Transverse colon (tissue), 4 donors: ENCODE measurements at regions of chr4 and their contacts with region 1.

Region 1: GRCh38 chr4:153282023-153282422 is 62.5 kb upstream of the MND1 start:
- DNase-seq: no peak
- H3K4me3 ChIP-seq: no peak overlapping the region
- H3K27ac ChIP-seq: no peak overlapping the region
- H3K4me1 ChIP-seq: peaks cover 0 to 4% (median 0%) of the 10 kb centered on the region in 4 donors
- H3K27me3 ChIP-seq: no peaks in the 10 kb centered on the region
- CTCF ChIP-seq: no peak
- EP300 ChIP-seq: no peak
- POLR2A ChIP-seq: no peak

Region 2: DNA sequence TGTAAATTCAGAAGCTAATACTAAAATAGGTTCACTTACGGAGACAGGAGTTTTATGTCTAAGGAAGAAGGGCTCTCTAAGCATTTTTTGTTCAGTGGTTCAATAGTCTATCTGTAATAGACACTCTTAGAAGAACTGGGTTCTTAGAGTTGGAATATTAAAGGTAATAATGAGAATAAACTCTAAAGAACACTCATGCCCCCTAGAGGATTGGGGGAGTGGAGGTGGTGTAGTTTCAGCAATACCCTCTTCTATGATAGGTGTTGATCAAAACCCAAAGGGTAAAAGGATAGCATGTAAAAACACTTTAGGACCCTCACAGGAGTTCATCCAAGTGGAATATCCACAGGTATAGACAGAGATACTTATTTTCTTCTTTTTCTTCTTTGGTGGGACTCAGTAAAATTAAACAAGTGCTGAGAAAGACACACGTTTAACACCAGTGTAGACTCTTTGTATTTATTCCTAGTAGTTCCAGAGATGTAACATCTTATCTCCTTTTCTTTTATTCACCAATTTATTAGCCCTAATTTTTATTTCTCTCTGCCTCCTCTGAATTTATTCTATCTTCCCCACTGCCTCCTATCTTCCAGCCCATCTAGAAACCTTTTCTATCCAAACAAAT is 36.8 kb after region 1 on chr4:
- in situ Hi-C with region 1: no loop called
- intact Hi-C with region 1: loop called (anchors 2 kb)
- DNase-seq: no peak
- H3K4me3 ChIP-seq: no peak overlapping the region
- H3K27ac ChIP-seq: no peak overlapping the region
- H3K4me1 ChIP-seq: no peaks in the 10 kb centered on the region
- H3K27me3 ChIP-seq: no peaks in the 10 kb centered on the region
- CTCF ChIP-seq: peak; percentile 47 to 59 (median 56)
- EP300 ChIP-seq: no peak
- POLR2A ChIP-seq: no peak